ENCODE measurements at regions of chr13 and their contacts with region 1.

Region 1: DNA sequence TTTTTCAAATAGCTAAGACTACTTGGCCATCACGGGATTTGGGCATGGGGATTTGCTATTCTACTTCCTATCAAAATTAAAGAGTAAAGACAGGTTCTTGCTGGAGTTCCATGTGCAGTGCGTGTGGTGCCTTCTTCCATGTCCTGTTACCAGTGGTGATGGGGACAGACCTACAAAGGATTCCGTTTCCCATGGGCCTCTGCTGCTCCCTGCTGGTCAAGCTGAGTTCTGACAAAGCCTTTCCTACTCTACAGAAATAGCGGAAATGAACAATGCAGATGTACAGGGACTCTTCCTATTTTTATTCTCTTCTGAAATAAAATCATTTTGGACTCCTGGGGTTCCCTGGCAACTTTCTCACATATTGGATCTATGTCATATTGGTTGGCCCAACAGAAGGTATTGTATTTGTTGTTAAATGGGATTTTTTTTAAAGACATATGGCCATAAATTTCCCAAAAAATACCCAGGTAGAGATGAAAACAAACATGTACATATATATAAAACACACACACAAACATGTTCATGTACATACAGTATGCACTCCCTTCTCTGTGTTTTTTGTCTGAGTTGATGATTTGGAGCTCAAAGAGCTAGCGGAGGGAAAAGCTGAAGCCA is 90.5 kb upstream of the SLC15A1 start:
- DNase-seq: peak; percentile 50 to 81 (median 71)
- H3K4me3 ChIP-seq: no peak overlapping the region
- H3K27ac ChIP-seq: peak overlapping the region in 44 of 59 donors; percentile 0 to 69 (median 40)
- H3K27me3 ChIP-seq: no peaks in the 10 kb centered on the region
- CTCF ChIP-seq: peak; percentile 67 to 90 (median 85)

Region 2: GRCh38 chr13:98869408-98870090 is 26.6 kb after region 1 on chr13:
- intact Hi-C with region 1: loop called in 1 of 2 experiments (anchors 2 kb)
- DNase-seq: peak in 1 of 10 donors; percentile 24
- H3K4me3 ChIP-seq: no peak overlapping the region
- H3K27ac ChIP-seq: peak overlapping the region in 3 of 59 donors; percentile 14 to 20 (median 20)
- H3K27me3 ChIP-seq: no peaks in the 10 kb centered on the region
- CTCF ChIP-seq: peak in 5 of 56 donors; percentile 7 to 24 (median 11)

Region 3: GRCh38 chr13:98879957-98880356 is 37.0 kb after region 1 on chr13:
- intact Hi-C with region 1: loop called in 1 of 2 experiments (anchors 5 kb)
- DNase-seq: no peak
- H3K4me3 ChIP-seq: no peak overlapping the region
- H3K27ac ChIP-seq: peak overlapping the region in 38 of 59 donors; percentile 1 to 87 (median 78)
- H3K27me3 ChIP-seq: no peaks in the 10 kb centered on the region
- CTCF ChIP-seq: no peak

Region 4: GRCh38 chr13:98890186-98890585 is 47.2 kb after region 1 on chr13:
- intact Hi-C with region 1: loop called in 1 of 2 experiments (anchors 10 kb)
- DNase-seq: peak in 9 of 10 donors; percentile 39 to 76 (median 64)
- H3K4me3 ChIP-seq: peak overlapping the region in 1 of 59 donors; percentile 14
- H3K27ac ChIP-seq: peak overlapping the region in 41 of 59 donors; percentile 2 to 74 (median 48)
- H3K27me3 ChIP-seq: no peaks in the 10 kb centered on the region
- CTCF ChIP-seq: peak in 15 of 56 donors; percentile 5 to 49 (median 18)

Region 5: DNA sequence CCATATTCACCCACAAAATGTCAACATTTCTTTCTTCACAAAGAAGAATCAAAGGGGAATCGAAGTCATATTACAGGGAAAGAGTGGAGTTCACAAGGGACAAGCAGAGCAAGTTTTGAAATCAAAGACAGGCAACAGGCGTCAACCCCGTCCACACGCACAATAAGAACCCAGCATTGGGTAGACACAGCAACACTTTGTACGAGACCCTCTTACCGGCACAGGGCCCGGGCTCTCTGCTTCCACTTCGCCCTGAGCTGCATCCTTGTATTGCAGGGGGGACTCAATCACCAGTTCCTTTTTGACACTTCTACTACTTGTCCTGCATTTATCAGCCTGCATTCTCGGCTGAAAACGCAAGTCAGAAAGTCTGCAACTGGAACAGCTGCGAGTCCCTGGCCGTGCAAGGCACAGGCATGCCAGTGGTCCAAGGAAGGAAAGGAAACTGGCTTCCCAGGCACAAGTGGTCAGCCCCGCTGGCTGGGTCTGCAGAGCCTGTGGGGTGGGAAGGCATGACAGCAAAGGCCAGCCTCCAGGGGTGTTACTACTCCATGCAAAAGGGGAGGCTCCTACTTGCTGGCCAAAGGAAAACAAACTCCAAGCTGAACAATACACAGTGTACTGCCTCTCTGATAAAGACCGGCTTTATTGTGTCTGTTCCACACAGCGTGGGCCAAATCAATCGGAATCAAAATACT is 134.7 kb after region 1 on chr13 and contains the start of gene DOCK9:
- intact Hi-C with region 1: loop called in 1 of 2 experiments (anchors 5 kb)
- DNase-seq: peak; percentile 34 to 90 (median 82)
- H3K4me3 ChIP-seq: peak within 1 kb of the TSS; percentile 24 to 79 (median 62)
- H3K27ac ChIP-seq: peak within 1 kb of the TSS; percentile 68 to 99 (median 94)
- H3K27me3 ChIP-seq: no peaks in the 10 kb centered on the region
- CTCF ChIP-seq: peak in 25 of 56 donors; percentile 6 to 49 (median 17)
- total RNA-seq, gene DOCK9: 92.4 to 354 (median 139) TPM

Region 6: GRCh38 chr13:99033814-99034213 is 190.8 kb after region 1 on chr13:
- intact Hi-C with region 1: loop called (anchors 5 to 10 kb)
- DNase-seq: no peak
- H3K4me3 ChIP-seq: no peak overlapping the region
- H3K27ac ChIP-seq: peak overlapping the region in 3 of 59 donors; percentile 11 to 55 (median 11)
- H3K27me3 ChIP-seq: no peaks in the 10 kb centered on the region
- CTCF ChIP-seq: peak; percentile 34 to 91 (median 74)

Region 7: DNA sequence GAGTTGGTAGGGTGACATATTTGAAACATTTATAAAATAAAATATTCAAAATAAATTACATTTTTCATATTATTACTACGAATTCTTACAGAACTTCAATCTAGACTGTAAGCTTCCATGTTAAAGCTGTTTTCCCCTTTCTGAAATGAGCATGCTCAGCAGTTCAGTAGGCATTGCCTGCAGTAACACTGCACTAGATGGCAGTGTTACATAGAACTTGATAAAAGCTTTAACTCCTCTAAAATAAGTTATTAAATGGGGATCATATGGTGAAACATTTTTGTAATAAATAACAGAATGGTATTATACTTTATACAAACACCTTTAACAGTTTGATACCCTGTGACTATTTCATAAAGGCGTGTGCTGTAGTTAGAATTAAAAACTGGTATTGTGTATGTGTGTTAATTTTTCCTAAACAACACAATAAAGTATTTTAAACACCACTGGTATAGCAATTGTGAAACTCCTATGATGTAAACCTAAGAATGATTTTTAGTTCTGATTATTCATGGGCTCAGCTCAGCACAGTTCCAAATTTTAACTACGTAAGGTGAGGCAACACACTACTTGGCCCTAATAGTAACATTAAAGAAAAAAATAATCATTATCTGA is 426.8 kb after region 1 on chr13:
- intact Hi-C with region 1: loop called in 1 of 2 experiments (anchors 5 kb)
- DNase-seq: peak in 1 of 10 donors; percentile 18
- H3K4me3 ChIP-seq: no peak overlapping the region
- H3K27ac ChIP-seq: peak overlapping the region in 1 of 59 donors; percentile 16
- H3K27me3 ChIP-seq: no peaks in the 10 kb centered on the region
- CTCF ChIP-seq: peak; percentile 32 to 87 (median 70)